Left colon (tissue), 2 donors: ENCODE measurements at regions of chr1 and their contacts with region 1.

Region 1: DNA sequence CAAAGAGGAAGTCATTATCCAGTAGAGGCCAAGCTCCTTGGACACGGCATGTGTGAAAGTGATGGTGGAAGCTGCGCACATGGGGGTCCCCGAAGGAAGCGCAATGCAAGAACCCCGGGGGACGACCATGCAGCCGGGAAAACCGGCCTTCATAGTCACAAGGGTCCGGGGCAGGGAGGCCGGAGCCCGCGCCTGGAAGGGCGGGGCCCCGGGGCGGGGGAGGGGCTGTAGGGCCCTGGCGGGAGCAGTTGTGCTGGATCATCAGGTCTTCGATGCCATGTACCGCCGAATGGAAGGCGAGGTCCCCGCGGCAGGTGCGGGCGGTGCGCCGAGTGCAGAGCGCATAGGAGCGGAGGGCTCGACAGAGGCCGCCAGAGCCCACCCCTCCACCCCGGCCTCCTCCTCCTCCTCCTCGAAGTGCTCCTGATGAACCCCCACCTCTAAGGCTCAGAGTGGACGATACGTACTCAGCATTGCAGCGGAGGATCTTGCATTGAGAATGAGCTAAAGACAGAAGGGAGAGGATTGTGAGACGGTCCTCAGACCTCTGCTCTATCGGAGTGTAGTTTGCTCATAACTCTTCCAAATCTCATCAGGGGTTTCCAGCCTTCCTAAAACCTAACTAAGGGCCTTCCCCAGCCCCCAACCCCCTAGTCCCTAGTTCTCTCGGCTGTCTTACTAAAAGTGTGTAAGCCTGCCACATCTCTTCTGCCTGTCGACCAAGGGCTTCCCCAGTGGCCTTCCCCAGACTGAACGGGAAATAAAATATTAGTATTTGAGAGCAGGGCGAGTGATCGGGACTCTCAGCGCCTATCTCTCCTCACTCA is 2.1 kb downstream of the HJV start:
- DNase-seq: no peak
- ATAC-seq: peak; percentile 24

Region 2: DNA sequence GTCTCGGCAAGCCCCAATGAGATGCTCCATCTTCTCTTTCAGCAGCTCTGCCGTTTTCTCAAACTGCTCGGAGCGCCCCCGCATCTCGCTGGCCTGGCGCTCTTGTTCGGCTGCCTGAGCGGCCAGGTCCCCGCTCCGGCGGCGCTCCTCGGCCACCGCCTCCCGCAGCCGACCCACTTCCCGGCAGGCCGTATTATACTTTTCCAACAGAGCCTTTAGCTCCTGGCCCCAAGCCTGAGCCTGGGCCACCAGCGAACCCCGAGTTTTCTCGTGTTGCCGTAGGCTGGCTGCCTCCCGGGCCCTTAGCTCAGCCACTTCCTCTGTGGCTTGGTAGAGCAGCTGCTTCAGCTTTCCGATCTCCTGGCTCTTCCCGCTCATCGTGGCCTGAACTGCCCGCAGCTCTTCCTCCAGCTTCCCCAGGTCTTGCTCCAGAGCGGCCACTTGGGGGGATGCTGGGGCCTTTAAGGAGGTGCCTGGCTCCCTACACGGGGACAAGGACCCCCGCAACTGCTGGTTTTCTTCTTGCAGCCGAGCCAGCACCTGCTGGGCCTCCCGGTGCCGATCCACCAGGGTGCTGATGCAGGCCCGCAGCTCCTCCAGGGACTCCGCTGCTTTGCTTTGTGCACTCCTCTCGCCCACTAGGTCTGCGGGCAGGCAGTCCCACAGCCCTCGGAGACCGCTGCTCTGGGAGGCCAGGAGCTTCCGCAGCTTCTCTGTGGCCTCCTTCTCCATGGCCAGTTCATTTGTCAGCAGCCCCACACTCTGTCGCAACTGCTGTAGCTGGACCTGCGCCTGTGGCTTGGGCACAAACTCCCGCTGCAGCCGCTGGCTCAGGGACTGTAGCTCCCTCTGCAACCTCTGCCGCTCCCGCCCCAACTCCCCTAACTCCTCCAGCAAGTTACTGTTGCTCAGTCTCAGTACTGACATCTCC is 147.2 kb before region 1 on chr1:
- intact Hi-C with region 1: no loop called
- DNase-seq: peak; percentile 39 to 41
- ATAC-seq: peak; percentile 51

Region 3: DNA sequence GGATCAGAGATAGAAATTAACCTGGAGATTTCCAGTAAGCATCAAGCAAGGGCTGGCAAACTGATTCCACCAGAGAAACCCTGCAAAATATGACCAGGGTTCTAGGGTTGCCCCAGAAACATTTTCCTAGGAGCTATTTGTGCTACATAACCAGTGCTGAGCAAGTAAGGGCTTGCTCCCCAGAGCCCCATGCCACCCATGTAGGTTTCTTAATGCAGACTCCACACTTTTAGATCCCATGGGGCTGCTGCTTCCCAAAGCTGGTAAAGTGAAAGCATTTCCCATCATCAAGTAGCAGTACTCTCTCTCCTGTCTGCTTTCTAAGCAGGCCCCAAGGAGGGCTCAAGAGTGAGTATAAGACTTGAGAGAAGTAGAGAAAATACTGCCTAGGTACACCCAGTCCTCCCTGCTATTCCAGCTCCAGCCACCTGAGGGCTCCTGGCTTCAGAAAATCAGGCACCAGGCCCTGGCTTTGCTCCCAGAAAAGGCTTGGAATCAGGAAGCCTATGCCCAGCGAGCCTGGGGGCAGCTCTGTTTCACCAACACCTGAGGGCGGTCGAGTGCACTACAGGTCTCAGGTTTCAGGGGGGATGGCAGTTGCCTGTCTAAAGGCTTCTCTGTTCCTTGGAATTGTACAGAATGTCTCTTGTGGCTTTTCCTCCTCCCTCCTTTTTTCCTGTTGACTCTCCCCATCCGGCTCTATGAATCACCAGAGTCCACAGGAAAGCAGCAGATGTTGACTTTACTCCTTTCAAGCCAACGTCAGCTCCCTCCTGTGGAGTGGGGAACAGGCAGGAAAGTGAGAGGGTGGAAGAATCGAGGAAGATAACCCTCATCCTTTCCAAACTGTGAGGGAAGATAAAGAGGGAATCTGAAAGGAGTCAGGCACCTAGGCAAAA is 127.6 kb before region 1 on chr1:
- intact Hi-C with region 1: loop called in 1 of 2 experiments (anchors 5 kb)
- DNase-seq: peak; percentile 93 to 96
- ATAC-seq: peak; percentile 93

Region 4: DNA sequence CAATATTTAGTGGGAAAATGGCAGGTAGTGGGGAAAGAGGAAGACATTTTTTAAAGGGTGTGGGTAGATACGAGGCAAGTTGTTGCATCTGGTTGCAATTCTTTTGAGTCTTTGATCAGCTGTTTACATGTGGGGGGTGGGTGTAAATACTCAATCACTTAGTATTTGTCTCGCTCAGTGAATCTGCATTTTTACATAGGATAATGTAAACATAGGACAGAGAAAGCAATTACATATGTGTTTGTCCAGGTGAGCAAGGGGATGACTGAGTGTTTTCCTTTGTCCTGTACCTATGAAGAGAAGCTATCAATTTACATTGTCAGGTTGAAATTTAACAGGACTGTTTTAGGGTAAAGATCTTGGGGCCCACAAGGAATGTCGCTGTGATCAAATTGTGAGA is 1074.0 kb after region 1 on chr1:
- intact Hi-C with region 1: no loop called
- DNase-seq: no peak
- ATAC-seq: no peak